Endothelial cell of umbilical vein (primary cell): ENCODE measurements at regions of chr11 and their contacts with region 1.

Region 1: DNA sequence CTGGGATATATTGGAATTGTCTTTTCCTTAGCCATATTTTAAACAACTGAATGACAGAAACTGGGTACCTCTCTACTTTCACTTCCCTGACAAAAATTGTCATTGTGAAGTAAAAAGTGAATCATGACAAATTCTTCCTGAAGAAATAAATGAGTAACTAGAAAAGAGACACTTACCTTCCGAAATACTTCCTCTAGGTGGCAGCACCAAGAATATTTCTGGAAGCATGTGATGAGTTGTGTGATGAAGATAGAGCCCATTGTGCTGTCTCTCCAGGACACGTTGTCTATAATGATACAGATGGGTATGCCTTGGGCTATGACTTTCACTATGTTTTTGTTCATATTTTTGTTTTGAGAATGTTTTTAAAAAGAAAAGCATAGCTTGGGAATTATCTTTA is 21.5 kb downstream of the CASP4 start:
- DNase-seq: peak; percentile 74
- H3K4me3 ChIP-seq: no peak overlapping the region
- H3K27ac ChIP-seq: no peak overlapping the region
- H3K4me1 ChIP-seq: no peaks in the 10 kb centered on the region
- H3K27me3 ChIP-seq: no peaks in the 10 kb centered on the region
- CTCF ChIP-seq: peak; percentile 33 to 35
- POLR2A ChIP-seq: no peak

Region 2: DNA sequence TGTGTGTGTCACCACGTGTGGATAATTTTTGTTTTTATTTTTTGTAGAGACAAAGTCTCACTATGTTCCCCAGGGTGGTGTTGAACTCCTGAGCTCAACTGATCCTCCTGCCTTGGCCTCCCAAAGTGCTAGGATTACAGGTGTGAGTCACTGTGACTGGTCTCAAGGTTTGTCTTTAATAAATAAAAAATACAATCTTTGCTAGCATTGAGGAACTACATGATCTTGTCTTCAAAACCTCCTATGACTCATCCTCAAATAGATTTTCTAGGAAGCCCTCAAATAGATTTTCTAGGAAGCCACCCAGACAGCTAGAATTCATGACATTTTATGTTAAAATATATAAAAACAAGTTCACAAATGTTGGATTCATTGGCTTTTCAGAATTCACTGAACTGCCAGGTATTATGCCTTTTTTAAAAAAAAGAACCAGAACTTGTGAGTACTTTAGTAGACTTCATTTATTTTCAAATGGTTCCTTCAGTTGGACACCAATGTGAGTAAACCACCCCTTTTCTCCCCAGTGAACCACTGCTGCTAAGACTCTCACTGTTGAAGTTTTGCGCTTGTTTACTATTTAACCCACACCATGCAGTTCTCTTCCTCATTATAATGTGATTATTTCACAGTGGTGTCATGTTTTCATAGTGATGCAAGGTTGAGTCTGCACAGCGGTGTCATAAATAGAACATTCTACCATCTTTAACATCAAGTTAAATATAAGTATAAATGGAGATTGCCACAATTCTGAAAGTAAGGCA is 352.5 kb before region 1 on chr11:
- CTCF ChIA-PET with region 1: no interaction called
- POLR2A ChIA-PET with region 1: no interaction called
- dilution Hi-C with region 1: no loop called
- intact Hi-C with region 1: no loop called
- DNase-seq: no peak
- H3K4me3 ChIP-seq: no peak overlapping the region
- H3K27ac ChIP-seq: no peak overlapping the region
- H3K4me1 ChIP-seq: no peaks in the 10 kb centered on the region
- H3K27me3 ChIP-seq: no peaks in the 10 kb centered on the region
- CTCF ChIP-seq: no peak
- POLR2A ChIP-seq: no peak

Region 3: DNA sequence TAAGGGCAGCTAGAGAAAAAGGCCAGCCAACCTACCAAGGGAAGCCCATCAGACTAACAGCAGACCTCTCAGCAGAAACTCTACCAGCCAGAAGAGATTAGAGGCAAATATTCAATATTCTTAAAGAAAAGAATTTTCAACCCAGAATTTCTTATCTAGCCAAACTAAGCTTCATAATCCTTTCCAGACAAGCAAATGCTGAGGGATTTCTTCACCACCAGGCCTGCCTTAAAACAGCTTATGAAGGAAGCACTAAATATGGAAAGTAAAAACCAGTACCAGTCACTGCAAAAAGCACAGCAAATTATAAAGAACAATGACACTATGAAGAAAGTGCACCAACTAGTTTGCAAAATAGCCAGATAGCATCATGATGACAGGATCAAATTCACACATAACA is 18.1 kb before region 1 on chr11:
- CTCF ChIA-PET with region 1: interaction called, 10 read pairs
- POLR2A ChIA-PET with region 1: no interaction called
- dilution Hi-C with region 1: no loop called
- intact Hi-C with region 1: no loop called
- DNase-seq: no peak
- H3K4me3 ChIP-seq: no peak overlapping the region
- H3K27ac ChIP-seq: no peak overlapping the region
- H3K4me1 ChIP-seq: no peaks in the 10 kb centered on the region
- H3K27me3 ChIP-seq: no peaks in the 10 kb centered on the region
- CTCF ChIP-seq: no peak
- POLR2A ChIP-seq: no peak